Kidney (tissue), 22 donors: ENCODE measurements at regions of chr4 and their contacts with region 1.

Region 1: DNA sequence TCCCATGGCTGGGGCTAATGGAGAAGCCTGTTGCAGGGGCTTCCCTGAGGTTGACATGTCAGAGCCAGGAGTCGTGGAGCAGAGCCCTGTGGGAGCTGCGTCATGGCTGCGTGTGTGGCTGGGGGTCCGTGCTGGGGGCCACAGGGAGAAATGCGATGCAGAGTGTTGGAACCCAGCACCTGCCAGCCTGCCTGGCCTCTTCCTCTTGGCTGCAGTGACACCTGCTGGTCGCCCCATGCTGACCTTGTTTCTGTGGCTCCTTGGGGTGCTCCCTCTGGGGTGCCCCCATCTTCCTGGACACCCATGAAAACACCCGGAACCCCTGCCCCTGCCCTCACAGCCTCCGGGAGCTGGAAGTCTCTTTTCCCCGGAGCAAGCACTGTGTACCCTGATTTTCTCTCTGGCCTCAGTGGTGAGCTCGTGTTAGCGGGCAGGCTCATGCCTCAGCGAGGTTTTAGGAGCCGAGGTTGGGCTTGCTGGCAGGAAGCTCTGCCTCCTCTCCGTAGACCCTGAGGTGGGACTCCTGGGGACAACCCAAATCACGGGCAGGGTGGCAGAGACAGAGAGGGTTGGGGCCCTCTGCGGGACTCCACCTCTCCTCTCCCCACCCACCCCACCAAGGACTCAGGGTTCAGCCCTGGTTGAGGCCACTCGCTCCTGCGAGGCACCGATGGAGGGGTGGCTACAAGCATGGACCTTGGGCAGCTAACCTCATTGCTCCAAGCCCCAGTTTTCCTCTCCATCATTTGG is 103.7 kb downstream of the SORCS2 start:
- DNase-seq: peak in 2 of 5 donors; percentile 61 to 62
- H3K4me3 ChIP-seq: no peak overlapping the region
- H3K27ac ChIP-seq: no peak overlapping the region
- H3K4me1 ChIP-seq: peaks cover 0 to 9% (median 0%) of the 10 kb centered on the region in 3 donors
- H3K27me3 ChIP-seq: no peaks in the 10 kb centered on the region
- CTCF ChIP-seq: peak; percentile 57

Region 2: GRCh38 chr4:7192252-7193029 is 103.6 kb before region 1 on chr4 and contains the start of gene SORCS2:
- intact Hi-C with region 1: loop called (anchors 10 kb)
- DNase-seq: peak; percentile 56 to 87 (median 83)
- H3K4me3 ChIP-seq: peak within 1 kb of the TSS in 2 of 3 donors; percentile 30 to 44
- H3K27ac ChIP-seq: no peak within 1 kb of the TSS
- H3K4me1 ChIP-seq: peaks cover 0 to 6% (median 0%) of the 10 kb centered on the region in 3 donors
- H3K27me3 ChIP-seq: peaks cover 6% of the 10 kb centered on the region
- CTCF ChIP-seq: peak; percentile 58
- total RNA-seq, gene SORCS2: 9.1 TPM

Region 3: DNA sequence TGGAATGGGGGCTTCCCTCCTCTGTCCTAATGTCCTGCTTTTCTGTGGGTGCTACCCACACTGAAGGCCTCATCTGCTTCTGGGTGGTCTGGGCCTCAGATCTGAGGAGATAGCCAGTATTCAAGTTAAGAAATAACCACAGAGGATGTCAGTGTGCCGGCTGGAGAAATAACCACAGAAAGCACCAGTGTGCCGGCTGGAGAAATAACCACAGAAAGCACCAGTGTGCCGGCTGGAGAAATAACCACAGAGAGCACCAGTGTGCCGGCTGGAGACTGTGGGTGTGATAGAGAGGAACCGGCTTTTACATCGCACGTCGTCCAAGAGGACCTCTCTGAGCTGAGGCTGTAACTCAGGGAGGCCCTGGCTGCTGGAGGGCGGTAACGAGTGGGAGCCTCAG is 204.3 kb after region 1 on chr4:
- intact Hi-C with region 1: no loop called
- DNase-seq: no peak
- H3K4me3 ChIP-seq: no peak overlapping the region
- H3K27ac ChIP-seq: no peak overlapping the region
- H3K4me1 ChIP-seq: no peaks in the 10 kb centered on the region
- H3K27me3 ChIP-seq: no peaks in the 10 kb centered on the region
- CTCF ChIP-seq: no peak